Activated CD4-positive, alpha-beta memory T cell treated with anti-CD3 and anti-CD28 coated beads, Interleukin-2, amount 10 ng/mL, durations not matched to agents 7 days and 5 days (primary cell): ENCODE measurements at regions of chr15 and their contacts with region 1.

Region 1: GRCh38 chr15:63188926-63189871 is at the start of gene RAB8B:
- DNase-seq: peak; percentile 99
- H3K4me3 Mint-ChIP-seq: peak within 1 kb of the TSS; percentile 97
- H3K27ac Mint-ChIP-seq: peak within 1 kb of the TSS; percentile 100
- H3K4me1 Mint-ChIP-seq: peaks cover 47% of the 10 kb centered on the region
- H3K27me3 Mint-ChIP-seq: peaks cover 11% of the 10 kb centered on the region
- total RNA-seq, gene RAB8B: 133 to 139 TPM

Region 2: DNA sequence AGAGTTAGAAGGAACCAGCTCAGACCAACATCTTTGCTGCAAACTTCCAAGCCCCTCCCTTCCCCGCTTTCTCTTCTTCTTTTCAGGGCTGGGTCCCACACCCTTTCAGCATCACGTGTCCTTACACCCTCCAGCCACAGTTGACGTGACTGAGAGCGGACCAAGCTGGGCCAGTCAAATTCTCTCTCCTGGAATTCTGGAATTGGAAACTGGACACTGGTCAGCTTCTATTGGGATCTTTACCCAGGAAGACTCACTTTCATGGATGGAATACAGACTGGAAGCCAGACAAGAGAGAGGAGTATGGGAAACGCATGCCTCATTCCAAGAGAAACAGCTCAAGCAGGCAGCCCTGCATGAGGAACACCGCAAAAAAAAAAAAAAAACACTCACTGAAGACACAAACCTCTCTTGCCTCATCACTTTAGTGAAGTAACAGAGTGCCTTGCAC is 159.1 kb before region 1 on chr15:
- CTCF ChIA-PET with region 1: no interaction called
- POLR2A ChIA-PET with region 1: no interaction called
- DNase-seq: no peak
- H3K4me3 Mint-ChIP-seq: no peak overlapping the region
- H3K27ac Mint-ChIP-seq: no peak overlapping the region
- H3K4me1 Mint-ChIP-seq: no peaks in the 10 kb centered on the region
- H3K27me3 Mint-ChIP-seq: peaks cover 15% of the 10 kb centered on the region

Region 3: GRCh38 chr15:63166219-63166618 is 23.0 kb before region 1 on chr15:
- CTCF ChIA-PET with region 1: interaction called, 6 read pairs
- POLR2A ChIA-PET with region 1: interaction called, 10 read pairs
- DNase-seq: no peak
- H3K4me3 Mint-ChIP-seq: no peak overlapping the region
- H3K27ac Mint-ChIP-seq: no peak overlapping the region
- H3K4me1 Mint-ChIP-seq: no peaks in the 10 kb centered on the region
- H3K27me3 Mint-ChIP-seq: peaks cover 3% of the 10 kb centered on the region

Region 4: GRCh38 chr15:63212050-63213004 is 23.1 kb after region 1 on chr15:
- CTCF ChIA-PET with region 1: interaction called, 10 read pairs
- POLR2A ChIA-PET with region 1: interaction called, 177 read pairs
- DNase-seq: no peak
- H3K4me3 Mint-ChIP-seq: peak overlapping the region; percentile 24
- H3K27ac Mint-ChIP-seq: peak overlapping the region; percentile 87
- H3K4me1 Mint-ChIP-seq: peaks cover 73% of the 10 kb centered on the region
- H3K27me3 Mint-ChIP-seq: no peaks in the 10 kb centered on the region

Region 5: DNA sequence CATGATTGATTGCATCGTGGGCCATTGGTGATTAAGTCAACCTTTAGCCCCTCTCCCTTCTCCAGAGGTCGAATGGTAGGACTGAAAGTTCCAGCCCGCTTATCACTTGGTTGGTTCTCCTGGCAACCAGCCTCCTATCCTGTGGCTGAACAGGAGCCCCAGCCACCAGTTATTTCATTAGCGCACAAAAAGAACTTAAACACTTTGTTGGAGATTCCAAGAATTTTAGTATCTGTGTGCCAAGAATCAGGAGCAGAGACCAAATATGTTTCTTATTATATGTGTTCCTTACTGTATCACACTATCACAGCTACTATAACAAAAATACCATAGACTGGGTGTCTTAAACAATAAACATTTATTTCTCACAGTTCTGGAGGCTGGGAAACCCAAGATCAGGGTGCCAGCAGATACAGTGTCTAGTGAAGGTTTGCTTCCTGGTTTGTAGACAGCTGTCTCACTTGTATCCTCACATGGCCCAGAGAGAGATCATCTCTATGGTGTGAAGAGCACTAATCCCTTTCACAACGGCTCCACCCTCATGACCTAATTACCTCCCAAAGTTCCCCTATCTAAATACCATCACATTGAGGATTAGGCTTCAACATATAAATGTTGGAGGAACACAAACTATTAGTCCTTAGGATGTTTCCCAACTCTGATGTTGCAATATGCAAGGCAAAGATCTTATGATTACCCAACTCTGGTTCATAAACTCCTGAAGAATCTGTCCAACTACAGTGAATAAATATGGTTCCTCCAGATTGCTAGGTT is 57.7 kb after region 1 on chr15:
- CTCF ChIA-PET with region 1: no interaction called
- POLR2A ChIA-PET with region 1: interaction called, 29 read pairs
- DNase-seq: no peak
- H3K4me3 Mint-ChIP-seq: no peak overlapping the region
- H3K27ac Mint-ChIP-seq: no peak overlapping the region
- H3K4me1 Mint-ChIP-seq: peaks cover 27% of the 10 kb centered on the region
- H3K27me3 Mint-ChIP-seq: no peaks in the 10 kb centered on the region